Activated CD4-positive, alpha-beta memory T cell treated with anti-CD3 and anti-CD28 coated beads for 36 hours (primary cell): ENCODE measurements at regions of chr12 and their contacts with region 1.

Region 1: GRCh38 chr12:103930034-103930786 is at the start of gene HSP90B1:
- DNase-seq: peak; percentile 100
- H3K4me3 Mint-ChIP-seq: peak within 1 kb of the TSS; percentile 86
- H3K27ac Mint-ChIP-seq: peak within 1 kb of the TSS; percentile 97
- H3K4me1 Mint-ChIP-seq: peaks cover 60% of the 10 kb centered on the region
- H3K27me3 Mint-ChIP-seq: no peaks in the 10 kb centered on the region
- total RNA-seq, gene HSP90B1: 452 to 453 TPM

Region 2: GRCh38 chr12:103495479-103496456 is 434.4 kb before region 1 on chr12 and contains the start of gene C12orf42:
- CTCF ChIA-PET with region 1: no interaction called
- POLR2A ChIA-PET with region 1: no interaction called
- intact Hi-C with region 1: loop called (anchors 2 kb)
- DNase-seq: peak; percentile 67
- H3K4me3 Mint-ChIP-seq: peak within 1 kb of the TSS; percentile 52
- H3K27ac Mint-ChIP-seq: no peak within 1 kb of the TSS
- H3K4me1 Mint-ChIP-seq: peaks cover 26% of the 10 kb centered on the region
- H3K27me3 Mint-ChIP-seq: peaks cover 30% of the 10 kb centered on the region
- total RNA-seq, gene C12orf42: not detected

Region 3: DNA sequence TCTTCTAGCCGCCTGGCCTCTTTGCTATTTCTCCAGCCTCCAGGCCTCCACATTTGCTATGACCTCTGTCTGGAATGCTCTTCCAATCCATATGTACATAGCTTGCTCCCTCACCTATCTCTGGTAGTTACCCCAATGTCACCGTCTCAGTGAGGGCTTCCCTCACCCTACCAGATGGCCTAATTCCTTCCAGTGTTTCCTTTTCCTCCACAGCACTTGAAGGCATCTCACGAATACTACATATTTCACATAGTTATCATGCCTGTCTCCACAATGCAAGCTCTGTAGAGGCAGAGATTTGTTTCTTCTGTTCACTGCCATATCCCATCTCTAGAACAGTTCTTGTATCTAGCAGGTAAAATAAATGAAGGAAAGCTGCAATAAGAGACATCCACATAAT is 21.3 kb before region 1 on chr12:
- CTCF ChIA-PET with region 1: interaction called, 3 read pairs
- POLR2A ChIA-PET with region 1: interaction called, 21 read pairs
- intact Hi-C with region 1: loop called (anchors 1 kb)
- DNase-seq: no peak
- H3K4me3 Mint-ChIP-seq: no peak overlapping the region
- H3K27ac Mint-ChIP-seq: no peak overlapping the region
- H3K4me1 Mint-ChIP-seq: peaks cover 27% of the 10 kb centered on the region
- H3K27me3 Mint-ChIP-seq: no peaks in the 10 kb centered on the region

Region 4: GRCh38 chr12:103965590-103966504 is 35.6 kb after region 1 on chr12 and contains the start of gene TDG:
- CTCF ChIA-PET with region 1: interaction called, 3 read pairs
- POLR2A ChIA-PET with region 1: interaction called, 49 read pairs
- intact Hi-C with region 1: loop called (anchors 1 kb)
- DNase-seq: peak; percentile 99
- H3K4me3 Mint-ChIP-seq: peak within 1 kb of the TSS; percentile 96
- H3K27ac Mint-ChIP-seq: peak within 1 kb of the TSS; percentile 96
- H3K4me1 Mint-ChIP-seq: peaks cover 53% of the 10 kb centered on the region
- H3K27me3 Mint-ChIP-seq: no peaks in the 10 kb centered on the region
- total RNA-seq, gene TDG: 29.1 to 29.7 TPM

Region 5: GRCh38 chr12:104137913-104138796 is 207.9 kb after region 1 on chr12 and contains the start of gene NFYB:
- CTCF ChIA-PET with region 1: no interaction called
- POLR2A ChIA-PET with region 1: interaction called, 15 read pairs
- intact Hi-C with region 1: loop called (anchors 1 kb)
- DNase-seq: peak; percentile 95
- H3K4me3 Mint-ChIP-seq: peak within 1 kb of the TSS; percentile 83
- H3K27ac Mint-ChIP-seq: peak within 1 kb of the TSS; percentile 84
- H3K4me1 Mint-ChIP-seq: peaks cover 13% of the 10 kb centered on the region
- H3K27me3 Mint-ChIP-seq: no peaks in the 10 kb centered on the region
- total RNA-seq, gene NFYB: 23.6 to 24.5 TPM

Region 6: DNA sequence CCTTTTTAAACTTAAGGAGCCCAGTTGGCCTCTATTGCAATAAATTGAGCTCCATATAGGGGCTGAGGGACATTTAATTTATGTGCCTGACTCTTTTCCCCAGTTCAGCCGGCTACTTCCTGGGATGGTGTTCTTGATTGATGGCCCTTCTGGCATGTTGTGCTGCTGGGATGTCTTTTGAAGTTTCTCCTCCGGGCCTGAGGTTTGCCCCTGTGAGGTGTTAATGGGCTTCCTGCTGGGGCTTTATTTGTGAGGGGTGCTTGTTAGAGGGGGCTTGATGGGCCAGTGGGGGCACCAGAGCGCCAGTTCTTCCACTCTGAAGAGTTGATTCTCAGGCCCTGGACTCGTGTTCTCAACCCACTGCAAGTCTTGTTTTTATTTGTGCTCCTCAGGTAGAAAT is 596.1 kb after region 1 on chr12:
- CTCF ChIA-PET with region 1: no interaction called
- POLR2A ChIA-PET with region 1: no interaction called
- intact Hi-C with region 1: no loop called
- DNase-seq: no peak
- H3K4me3 Mint-ChIP-seq: no peak overlapping the region
- H3K27ac Mint-ChIP-seq: no peak overlapping the region
- H3K4me1 Mint-ChIP-seq: peaks cover 56% of the 10 kb centered on the region
- H3K27me3 Mint-ChIP-seq: no peaks in the 10 kb centered on the region